Activated CD4-positive, alpha-beta T cell treated with anti-CD3 and anti-CD28 coated beads, Interleukin-2, amount 10 ng/mL, durations not matched to agents 24 days and 14 days (primary cell): ENCODE measurements at regions of chr18 and their contacts with region 1.

Region 1: DNA sequence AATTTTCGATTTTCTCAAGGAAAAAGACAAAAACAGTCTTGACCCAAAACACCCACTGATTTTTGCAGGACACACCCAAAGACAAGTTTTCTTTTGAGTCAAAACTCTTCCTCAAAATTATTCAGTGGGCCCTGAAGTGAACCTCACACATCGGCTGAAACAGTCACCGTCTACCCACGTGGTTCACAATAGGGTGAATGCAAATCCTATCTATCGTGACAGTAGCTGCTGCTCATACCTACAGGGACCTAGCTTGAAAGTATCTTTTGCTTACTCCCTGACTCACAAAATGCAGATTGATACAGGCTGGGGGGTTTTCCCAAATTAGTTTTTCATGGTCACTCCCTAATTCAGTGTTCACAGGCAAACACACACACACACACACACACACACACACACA is 10.7 kb upstream of the CD226 start:
- DNase-seq: peak; percentile 73
- H3K4me3 Mint-ChIP-seq: no peak overlapping the region
- H3K27ac Mint-ChIP-seq: no peak overlapping the region
- H3K4me1 Mint-ChIP-seq: peaks cover 24% of the 10 kb centered on the region
- H3K27me3 Mint-ChIP-seq: no peaks in the 10 kb centered on the region

Region 2: GRCh38 chr18:69978732-69979715 is 20.6 kb after region 1 on chr18:
- intact Hi-C with region 1: loop called (anchors 1 kb)
- DNase-seq: peak; percentile 52
- H3K4me3 Mint-ChIP-seq: no peak overlapping the region
- H3K27ac Mint-ChIP-seq: peak overlapping the region; percentile 51
- H3K4me1 Mint-ChIP-seq: peaks cover 34% of the 10 kb centered on the region
- H3K27me3 Mint-ChIP-seq: no peaks in the 10 kb centered on the region

Region 3: DNA sequence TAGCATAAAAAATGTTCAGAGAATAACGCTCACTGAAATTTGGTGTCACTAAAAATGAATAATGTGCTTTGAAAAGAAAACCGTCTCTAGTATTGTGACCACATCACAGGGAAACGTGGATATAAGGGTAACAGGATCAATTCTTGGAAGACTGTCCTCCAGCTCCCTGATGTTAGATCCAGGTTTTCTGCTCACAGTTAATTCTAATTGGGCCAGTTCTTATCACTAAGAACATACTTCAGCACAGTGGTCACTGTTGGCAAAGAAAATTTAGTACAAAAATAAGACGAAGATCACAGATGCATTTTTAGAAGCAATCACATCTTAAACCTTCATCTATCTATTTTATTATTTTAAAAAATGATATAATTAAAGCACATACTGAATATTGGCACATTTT is 46.3 kb after region 1 on chr18:
- intact Hi-C with region 1: no loop called
- DNase-seq: no peak
- H3K4me3 Mint-ChIP-seq: no peak overlapping the region
- H3K27ac Mint-ChIP-seq: no peak overlapping the region
- H3K4me1 Mint-ChIP-seq: peaks cover 3% of the 10 kb centered on the region
- H3K27me3 Mint-ChIP-seq: no peaks in the 10 kb centered on the region

Region 4: GRCh38 chr18:70015127-70015526 is 56.7 kb after region 1 on chr18:
- intact Hi-C with region 1: no loop called
- DNase-seq: no peak
- H3K4me3 Mint-ChIP-seq: no peak overlapping the region
- H3K27ac Mint-ChIP-seq: no peak overlapping the region
- H3K4me1 Mint-ChIP-seq: no peaks in the 10 kb centered on the region
- H3K27me3 Mint-ChIP-seq: no peaks in the 10 kb centered on the region

Region 5: GRCh38 chr18:70036771-70037347 is 78.4 kb after region 1 on chr18:
- intact Hi-C with region 1: no loop called
- DNase-seq: no peak
- H3K4me3 Mint-ChIP-seq: no peak overlapping the region
- H3K27ac Mint-ChIP-seq: no peak overlapping the region
- H3K4me1 Mint-ChIP-seq: no peaks in the 10 kb centered on the region
- H3K27me3 Mint-ChIP-seq: no peaks in the 10 kb centered on the region

Region 6: DNA sequence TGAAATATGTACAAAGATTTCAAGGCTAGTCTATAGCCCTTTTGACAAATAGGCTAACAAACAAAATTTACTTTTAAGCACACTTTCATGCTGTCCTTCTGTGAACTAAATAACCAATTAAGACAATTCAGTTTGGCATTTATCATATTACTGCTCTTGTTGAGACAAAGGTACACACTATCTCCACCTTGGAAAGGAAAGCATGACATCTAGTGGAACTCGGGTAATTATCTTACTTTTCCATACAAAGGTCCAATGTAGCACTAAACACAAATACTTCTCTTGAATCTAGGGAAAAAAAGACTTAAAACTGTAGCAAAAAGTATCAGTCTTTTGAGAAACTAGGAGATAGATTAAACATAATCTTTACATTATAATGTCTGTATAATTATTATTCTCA is 114.3 kb after region 1 on chr18:
- intact Hi-C with region 1: loop called (anchors 5 kb)
- DNase-seq: no peak
- H3K4me3 Mint-ChIP-seq: no peak overlapping the region
- H3K27ac Mint-ChIP-seq: no peak overlapping the region
- H3K4me1 Mint-ChIP-seq: peaks cover 4% of the 10 kb centered on the region
- H3K27me3 Mint-ChIP-seq: no peaks in the 10 kb centered on the region

Region 7: GRCh38 chr18:70085641-70086040 is 127.2 kb after region 1 on chr18:
- intact Hi-C with region 1: loop called (anchors 5 kb)
- DNase-seq: no peak
- H3K4me3 Mint-ChIP-seq: no peak overlapping the region
- H3K27ac Mint-ChIP-seq: no peak overlapping the region
- H3K4me1 Mint-ChIP-seq: no peaks in the 10 kb centered on the region
- H3K27me3 Mint-ChIP-seq: no peaks in the 10 kb centered on the region

Region 8: GRCh38 chr18:70205421-70206397 is 247.3 kb after region 1 on chr18 and contains the start of gene RTTN:
- intact Hi-C with region 1: loop called (anchors 5 kb)
- DNase-seq: peak; percentile 98
- H3K4me3 Mint-ChIP-seq: peak within 1 kb of the TSS; percentile 89
- H3K27ac Mint-ChIP-seq: peak within 1 kb of the TSS; percentile 99
- H3K4me1 Mint-ChIP-seq: peaks cover 20% of the 10 kb centered on the region
- H3K27me3 Mint-ChIP-seq: peaks cover 4% of the 10 kb centered on the region
- total RNA-seq, gene RTTN: 25.5 and 28.2 TPM in 2 replicates

Region 9: GRCh38 chr18:70234663-70235459 is 276.4 kb after region 1 on chr18:
- intact Hi-C with region 1: no loop called
- DNase-seq: peak; percentile 24
- H3K4me3 Mint-ChIP-seq: no peak overlapping the region
- H3K27ac Mint-ChIP-seq: no peak overlapping the region
- H3K4me1 Mint-ChIP-seq: no peaks in the 10 kb centered on the region
- H3K27me3 Mint-ChIP-seq: peaks cover 7% of the 10 kb centered on the region